ENCODE measurements at regions of chr3 and their contacts with region 1.

Region 1: DNA sequence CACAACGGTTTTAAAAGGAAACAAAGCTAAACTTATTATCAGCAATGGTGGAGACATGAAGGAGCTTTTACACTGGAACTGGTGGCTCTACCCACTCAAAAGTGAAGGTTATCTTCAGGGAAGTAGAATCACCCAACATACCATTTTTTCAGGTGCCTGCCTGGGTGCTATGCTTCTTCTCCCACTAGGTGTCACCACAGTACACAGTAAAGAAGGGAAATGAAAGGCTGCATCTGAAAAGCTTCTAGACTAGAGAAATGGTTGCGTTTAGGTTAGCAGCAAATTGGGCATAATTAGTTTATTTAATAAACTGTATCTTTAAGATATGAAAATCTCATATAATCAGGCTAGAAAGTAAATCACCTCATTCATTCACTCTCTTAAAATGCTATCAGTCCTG is 47.0 kb upstream of the SELENOK start:
- DNase-seq: peak; percentile 52
- ATAC-seq: peak; percentile 73
- H3K4me3 Mint-ChIP-seq: no peak overlapping the region
- H3K27ac Mint-ChIP-seq: no peak overlapping the region
- H3K4me1 Mint-ChIP-seq: no peaks in the 10 kb centered on the region
- H3K27me3 Mint-ChIP-seq: no peaks in the 10 kb centered on the region
- CTCF ChIP-seq: peak; percentile 70

Region 2: DNA sequence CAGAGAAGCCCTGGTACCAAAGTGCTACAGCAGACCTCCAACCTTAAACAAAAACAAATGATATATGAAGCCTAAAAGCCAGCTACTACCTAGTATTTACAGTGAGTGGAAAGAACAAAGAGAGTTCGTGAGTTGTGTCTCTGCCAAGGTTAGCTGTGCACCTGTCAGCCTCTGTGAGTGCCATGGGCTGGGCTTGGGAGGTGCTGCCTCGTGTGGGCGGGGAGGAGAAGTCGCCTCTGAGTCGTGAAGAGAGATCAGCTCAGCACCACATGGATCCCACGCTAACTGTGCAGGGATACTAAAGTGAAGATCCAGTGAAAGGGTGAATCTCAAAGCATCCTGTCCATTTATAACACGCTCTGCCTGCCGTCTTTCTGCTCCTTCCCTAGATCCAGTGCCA is 194.3 kb before region 1 on chr3:
- CTCF ChIA-PET with region 1: no interaction called
- POLR2A ChIA-PET with region 1: no interaction called
- DNase-seq: peak; percentile 49
- ATAC-seq: peak; percentile 75
- H3K4me3 Mint-ChIP-seq: no peak overlapping the region
- H3K27ac Mint-ChIP-seq: peak overlapping the region; percentile 13; the same call in 1 of the 2 replicates
- H3K4me1 Mint-ChIP-seq: peaks cover 31% of the 10 kb centered on the region
- H3K27me3 Mint-ChIP-seq: peaks cover 4% of the 10 kb centered on the region
- CTCF ChIP-seq: no peak

Region 3: GRCh38 chr3:53996141-53996861 is 57.7 kb after region 1 on chr3:
- CTCF ChIA-PET with region 1: no interaction called
- POLR2A ChIA-PET with region 1: no interaction called
- DNase-seq: no peak
- ATAC-seq: peak; percentile 64
- H3K4me3 Mint-ChIP-seq: no peak overlapping the region
- H3K27ac Mint-ChIP-seq: peak overlapping the region; percentile 25; the same call in 1 of the 2 replicates
- H3K4me1 Mint-ChIP-seq: peaks cover 18% of the 10 kb centered on the region
- H3K27me3 Mint-ChIP-seq: no peaks in the 10 kb centered on the region
- CTCF ChIP-seq: no peak

Region 4: DNA sequence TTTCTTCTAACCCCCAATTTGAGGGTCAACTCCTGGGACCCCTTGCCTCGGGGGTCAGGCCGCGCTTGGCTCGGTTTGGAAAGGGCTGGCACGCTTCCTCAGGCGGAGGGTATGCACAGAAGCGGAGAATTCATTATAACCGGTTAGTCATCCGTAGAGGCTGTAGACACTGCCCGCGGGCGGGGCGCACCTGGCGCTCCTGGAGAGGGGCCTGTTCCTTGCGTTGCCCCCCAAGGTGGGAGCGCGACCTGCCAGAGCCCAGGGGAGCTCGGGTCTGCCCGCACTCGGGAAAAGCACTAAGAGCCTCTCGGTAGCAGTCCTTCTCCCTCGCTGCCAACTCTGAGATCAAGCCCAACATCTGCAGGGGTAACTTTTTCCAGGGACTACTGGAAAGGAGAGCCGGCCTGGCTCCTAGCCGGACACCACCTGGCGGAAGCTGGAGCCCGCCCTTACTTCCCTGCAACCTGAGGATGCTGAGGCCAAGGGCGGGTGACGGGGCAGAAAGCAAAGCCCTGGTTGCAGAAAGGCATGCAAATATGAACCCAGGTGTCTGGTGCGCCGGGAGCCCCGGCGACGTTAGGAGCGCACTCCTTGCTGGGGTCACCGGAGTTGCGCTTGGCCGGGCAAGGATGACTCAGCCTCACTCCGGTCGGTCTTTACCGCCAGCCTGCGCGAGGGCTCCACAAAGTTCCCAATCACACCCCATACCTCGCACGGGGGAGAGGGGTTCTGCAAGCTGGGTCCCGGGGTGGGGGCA is 182.2 kb after region 1 on chr3:
- CTCF ChIA-PET with region 1: interaction called, 11 read pairs
- POLR2A ChIA-PET with region 1: no interaction called
- DNase-seq: peak; percentile 59
- ATAC-seq: peak; percentile 55
- H3K4me3 Mint-ChIP-seq: peak overlapping the region; percentile 75
- H3K27ac Mint-ChIP-seq: no peak overlapping the region
- H3K4me1 Mint-ChIP-seq: peaks cover 33% of the 10 kb centered on the region
- H3K27me3 Mint-ChIP-seq: peaks cover 72% of the 10 kb centered on the region
- CTCF ChIP-seq: no peak

Region 5: GRCh38 chr3:54358327-54358726 is 419.7 kb after region 1 on chr3:
- CTCF ChIA-PET with region 1: interaction called, 12 read pairs
- POLR2A ChIA-PET with region 1: no interaction called
- DNase-seq: no peak
- ATAC-seq: peak; percentile 34; the same call in 1 of the 2 replicates
- H3K4me3 Mint-ChIP-seq: no peak overlapping the region
- H3K27ac Mint-ChIP-seq: no peak overlapping the region
- H3K4me1 Mint-ChIP-seq: peaks cover 18% of the 10 kb centered on the region
- H3K27me3 Mint-ChIP-seq: no peaks in the 10 kb centered on the region
- CTCF ChIP-seq: no peak

Region 6: GRCh38 chr3:54393150-54393549 is 454.5 kb after region 1 on chr3:
- CTCF ChIA-PET with region 1: interaction called, 11 read pairs
- POLR2A ChIA-PET with region 1: no interaction called
- DNase-seq: no peak
- ATAC-seq: no peak
- H3K4me3 Mint-ChIP-seq: no peak overlapping the region
- H3K27ac Mint-ChIP-seq: no peak overlapping the region
- H3K4me1 Mint-ChIP-seq: no peaks in the 10 kb centered on the region
- H3K27me3 Mint-ChIP-seq: no peaks in the 10 kb centered on the region
- CTCF ChIP-seq: no peak

Region 7: GRCh38 chr3:54433846-54434245 is 495.2 kb after region 1 on chr3:
- CTCF ChIA-PET with region 1: interaction called, 15 read pairs
- POLR2A ChIA-PET with region 1: no interaction called
- DNase-seq: peak; percentile 82
- ATAC-seq: peak; percentile 97
- H3K4me3 Mint-ChIP-seq: no peak overlapping the region
- H3K27ac Mint-ChIP-seq: no peak overlapping the region
- H3K4me1 Mint-ChIP-seq: peaks cover 17% of the 10 kb centered on the region
- H3K27me3 Mint-ChIP-seq: no peaks in the 10 kb centered on the region
- CTCF ChIP-seq: peak; percentile 33; the same call in 1 of the 2 replicates

Region 8: DNA sequence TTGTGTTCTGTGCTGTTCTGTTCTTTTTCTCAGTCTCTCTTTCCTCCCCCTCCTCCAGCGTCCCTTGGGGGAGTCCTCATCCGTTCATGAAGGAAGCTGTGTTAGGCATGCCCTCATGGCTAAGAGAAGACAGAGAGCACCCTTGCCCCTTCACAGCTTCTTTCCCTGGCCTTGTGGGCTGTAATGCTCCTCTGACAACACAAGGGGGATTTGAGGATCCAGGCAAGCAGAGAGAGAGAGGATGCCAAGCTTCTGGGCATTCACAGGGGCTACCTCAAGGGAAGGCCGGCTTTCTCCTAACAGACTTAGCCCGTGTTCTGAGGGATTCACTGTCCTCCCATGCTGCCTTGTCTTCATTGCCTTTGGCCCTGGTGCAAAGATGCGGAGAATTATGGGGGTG is 599.7 kb after region 1 on chr3:
- CTCF ChIA-PET with region 1: no interaction called
- POLR2A ChIA-PET with region 1: no interaction called
- DNase-seq: peak; percentile 48
- ATAC-seq: peak; percentile 90
- H3K4me3 Mint-ChIP-seq: no peak overlapping the region
- H3K27ac Mint-ChIP-seq: no peak overlapping the region
- H3K4me1 Mint-ChIP-seq: peaks cover 2% of the 10 kb centered on the region; the same call in 1 of the 2 replicates
- H3K27me3 Mint-ChIP-seq: no peaks in the 10 kb centered on the region
- CTCF ChIP-seq: peak; percentile 48